ENCODE measurements at regions of chr5 and their contacts with region 1.

Region 1: DNA sequence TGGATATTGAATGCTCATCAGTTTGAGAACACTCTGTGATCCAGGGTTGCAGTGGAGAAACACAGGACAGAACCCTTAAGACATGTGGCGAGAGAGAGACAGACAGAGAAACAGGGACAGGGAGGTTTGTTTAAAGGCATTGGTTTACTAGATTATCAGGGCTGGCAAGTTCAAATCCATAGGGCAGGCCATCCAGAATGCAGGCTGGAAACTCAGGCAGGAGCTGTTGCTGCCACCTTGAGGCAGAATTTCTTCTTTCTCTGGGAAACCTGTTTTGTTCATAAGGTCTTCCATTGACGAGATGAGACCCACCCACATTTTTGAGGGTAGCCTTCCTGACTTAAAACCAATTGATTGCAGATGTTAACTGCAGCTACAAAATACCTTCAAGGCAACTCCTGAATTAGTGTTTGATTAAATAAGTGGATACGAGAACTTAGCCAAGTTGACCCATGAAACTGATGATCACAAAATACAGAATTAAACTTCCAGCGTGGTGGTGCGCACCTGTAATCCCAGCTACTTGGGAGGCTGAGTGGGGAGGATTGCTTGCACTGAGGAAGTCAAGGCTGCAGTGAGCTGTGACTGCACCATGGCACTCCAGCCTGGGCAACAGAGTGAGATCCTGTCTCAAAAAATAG is 55.9 kb downstream of the NSUN2 start:
- DNase-seq: peak in 4 of 10 donors; percentile 30 to 86 (median 56)

Region 2: DNA sequence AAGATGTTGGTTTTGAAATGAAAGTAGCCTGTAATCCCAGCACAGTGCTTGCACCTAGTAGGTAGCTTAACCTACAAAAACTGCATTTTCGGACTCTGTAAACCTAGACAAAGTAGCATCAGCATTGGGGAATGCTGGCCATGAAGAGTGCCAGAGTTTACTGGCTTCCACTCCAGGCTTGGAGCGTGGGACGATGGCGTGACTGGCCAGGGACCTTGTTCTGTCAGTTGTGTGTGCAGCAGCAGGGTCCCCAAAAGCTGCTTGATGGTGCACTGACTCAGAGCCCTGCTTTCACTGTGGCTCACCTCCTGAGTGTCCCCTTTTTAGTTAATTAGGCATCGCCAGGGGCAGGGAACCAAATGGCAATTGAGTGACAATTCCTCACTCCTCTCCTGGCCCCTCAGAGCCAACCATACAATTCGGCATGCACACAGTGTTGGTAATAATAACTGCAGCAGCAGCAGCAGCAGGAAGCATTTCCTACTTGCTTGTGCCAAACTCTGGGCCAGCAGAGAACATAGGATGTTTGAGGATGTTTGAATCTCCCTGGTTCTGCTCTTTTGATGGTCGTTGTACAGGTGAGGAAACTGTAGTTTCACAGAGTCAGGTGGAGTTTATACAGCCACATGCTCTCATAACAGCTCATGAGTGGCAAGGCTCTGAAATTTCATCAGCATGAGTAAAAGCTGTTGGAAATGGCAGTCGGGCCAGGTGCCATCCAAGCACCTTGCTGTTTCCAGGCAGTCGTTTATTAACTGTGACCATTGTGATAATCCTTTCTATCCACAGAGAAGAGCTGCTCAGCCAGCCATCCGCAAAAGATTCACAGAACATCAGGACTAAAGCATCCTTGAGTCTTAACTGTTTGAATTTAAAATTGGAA is 124.1 kb before region 1 on chr5:
- intact Hi-C with region 1: loop called (anchors 5 kb)
- DNase-seq: no peak

Measured in posterior cingulate gyrus (tissue), 11 donors.